ENCODE measurements at regions of chr3 and their contacts with region 1.

Region 1: DNA sequence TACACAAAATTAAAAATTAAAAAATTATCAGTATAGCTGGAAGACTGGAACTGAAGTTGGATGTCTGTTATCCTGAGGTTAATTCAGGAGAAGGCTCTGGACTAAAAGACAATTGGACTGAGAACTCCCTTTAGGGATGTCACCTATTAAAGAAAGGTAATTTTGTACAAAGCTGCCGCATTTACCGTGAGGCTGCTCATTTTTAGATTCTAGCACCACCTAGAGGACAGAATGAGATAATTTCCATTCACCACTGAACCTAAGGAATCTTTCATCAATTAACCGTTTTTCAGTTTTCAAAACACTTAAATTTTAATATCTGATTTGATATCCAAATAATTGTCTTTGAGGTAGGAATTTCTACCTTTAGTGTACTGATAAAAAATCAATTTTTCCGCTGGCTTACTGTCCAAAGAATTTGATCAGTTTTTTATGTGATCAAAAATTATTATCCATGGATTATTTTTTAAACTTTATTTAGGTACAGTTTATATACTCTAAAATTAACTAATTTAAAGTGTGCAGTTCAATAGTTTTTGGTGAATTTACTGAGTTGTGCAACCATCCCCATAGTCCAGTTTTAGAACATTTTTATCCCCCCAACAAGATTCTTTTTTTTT is 106.7 kb upstream of the TNIK start:
- DNase-seq: no peak
- ATAC-seq: peak; percentile 59

Region 2: DNA sequence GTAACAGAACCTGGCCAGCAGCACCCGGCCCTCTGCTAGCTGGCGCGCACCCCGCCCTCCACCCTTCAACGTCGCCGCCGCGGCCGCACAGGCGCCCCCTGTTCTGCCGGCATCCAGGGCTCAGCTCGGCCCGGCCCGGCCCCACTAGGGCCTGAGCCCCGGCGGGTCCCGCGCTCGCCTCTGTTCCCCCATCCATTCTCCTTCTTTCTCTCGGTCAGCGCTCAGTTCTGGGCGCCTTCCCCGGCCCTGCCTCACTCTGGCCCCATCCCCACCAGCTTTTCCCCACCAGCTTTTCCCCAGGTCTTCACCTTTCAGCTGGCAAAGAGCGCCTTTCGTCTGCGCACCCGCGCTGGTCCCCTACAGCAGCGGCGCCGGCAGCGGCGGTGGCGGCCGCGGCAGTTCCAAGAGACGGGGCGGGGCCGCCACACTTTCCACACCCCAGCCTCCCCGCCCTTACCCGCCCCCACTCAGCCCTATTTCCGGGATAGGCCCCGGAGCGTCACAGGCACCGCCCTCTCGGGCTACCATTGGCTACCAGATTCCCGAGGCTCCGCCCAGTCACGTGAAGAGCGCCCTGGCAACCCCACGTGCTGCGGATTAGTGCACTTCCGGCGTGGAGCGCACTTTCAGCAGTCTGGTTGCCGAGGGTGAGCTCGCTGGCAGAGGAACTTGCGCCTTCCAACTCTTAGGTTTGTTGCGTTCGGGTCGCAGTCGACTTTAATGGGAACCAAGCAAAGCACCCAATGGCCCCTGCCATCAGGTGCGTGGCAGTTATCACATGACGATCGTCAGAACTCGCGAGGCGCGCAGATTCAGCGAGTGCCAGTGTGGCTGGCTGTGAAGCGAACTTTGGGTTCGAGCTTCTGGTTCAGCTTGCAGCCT is 658.4 kb before region 1 on chr3 and contains the start of gene EIF5A2:
- intact Hi-C with region 1: no loop called
- DNase-seq: peak; percentile 98
- ATAC-seq: peak; percentile 99
- total RNA-seq, gene EIF5A2: 7.2 TPM

Region 3: DNA sequence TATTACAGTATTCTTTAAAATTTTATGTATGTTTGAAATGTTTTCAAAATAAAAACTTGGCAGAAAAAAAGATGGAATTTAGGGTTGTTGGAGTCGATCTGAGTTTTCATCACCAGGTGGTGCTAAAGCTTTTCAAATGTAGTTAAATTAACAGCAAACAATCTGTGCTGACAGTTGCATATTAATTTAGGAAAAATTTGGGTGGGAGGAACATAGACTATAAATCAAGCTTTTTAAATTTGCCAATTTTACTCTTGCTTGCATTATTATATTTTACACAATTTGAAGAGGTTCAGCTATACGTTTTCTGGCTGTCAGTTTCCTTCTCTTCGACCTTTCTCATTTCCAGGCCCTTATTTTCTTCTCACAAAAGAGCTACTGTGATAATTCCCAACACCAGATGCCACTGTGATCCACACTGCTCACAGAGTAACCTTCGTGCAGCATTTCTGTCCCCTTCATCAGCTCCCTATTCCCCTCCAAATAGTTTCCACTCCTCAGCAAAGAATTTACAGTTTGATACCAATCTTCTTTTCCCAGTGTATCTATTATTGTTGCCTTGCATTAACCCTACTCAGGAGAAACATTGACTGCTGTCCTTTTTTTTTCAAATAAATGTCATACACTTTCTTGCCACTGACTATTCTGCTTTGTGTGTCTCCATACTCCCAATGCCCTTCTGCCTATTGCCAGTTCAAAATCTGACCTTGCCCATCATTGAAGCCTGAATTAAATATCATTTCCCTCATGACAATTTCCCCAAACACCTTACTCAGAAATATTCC is 605.1 kb before region 1 on chr3:
- intact Hi-C with region 1: loop called (anchors 5 kb)
- DNase-seq: no peak
- ATAC-seq: peak; percentile 63

Region 4: GRCh38 chr3:171049861-171050444 is 517.0 kb before region 1 on chr3:
- intact Hi-C with region 1: loop called (anchors 5 kb)
- DNase-seq: peak; percentile 66
- ATAC-seq: peak; percentile 87

Region 5: GRCh38 chr3:171328419-171329082 is 238.4 kb before region 1 on chr3:
- intact Hi-C with region 1: loop called (anchors 10 kb)
- DNase-seq: peak; percentile 47
- ATAC-seq: peak; percentile 33

Region 6: GRCh38 chr3:171822431-171823106 is 255.7 kb after region 1 on chr3:
- intact Hi-C with region 1: no loop called
- DNase-seq: no peak
- ATAC-seq: no peak